ENCODE measurements at regions of chr19 and their contacts with region 1.

Region 1: DNA sequence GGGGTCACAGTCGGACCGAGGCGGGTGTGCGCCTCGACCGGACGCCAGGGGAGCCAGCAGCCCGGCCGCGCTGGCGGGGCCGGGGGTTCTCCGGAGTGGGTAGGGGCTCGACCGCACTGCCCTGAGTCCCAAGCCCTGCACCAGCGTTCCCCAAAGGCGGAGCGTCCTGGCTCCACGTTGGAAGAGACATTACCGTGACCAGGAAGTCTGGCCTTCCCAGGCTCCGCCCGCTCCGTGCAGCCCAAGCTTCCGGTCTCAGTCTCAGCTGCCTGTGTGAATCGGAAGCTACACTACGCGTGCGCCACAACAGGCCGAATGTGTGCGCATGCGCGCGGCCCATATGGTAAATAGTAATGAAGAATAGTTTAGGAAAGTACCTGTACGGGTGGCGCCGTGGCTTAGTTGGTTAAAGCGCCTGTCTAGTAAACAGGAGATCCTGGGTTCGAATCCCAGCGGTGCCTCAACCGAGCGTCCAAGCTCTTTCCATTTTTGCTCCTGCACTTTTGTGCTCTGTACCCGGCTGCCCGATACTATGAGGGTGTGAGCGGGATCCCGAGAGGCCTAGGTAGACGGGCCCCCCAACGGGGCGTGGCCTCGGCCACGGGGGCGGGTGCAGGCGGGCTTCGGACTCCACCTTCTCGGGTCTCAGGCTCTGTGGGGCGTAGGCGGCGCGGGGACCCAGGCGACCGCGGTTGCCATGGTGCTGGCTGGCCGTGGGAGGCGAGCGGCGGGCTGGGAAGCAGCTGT is 17.3 kb upstream of the LRP3 start:
- DNase-seq: peak; percentile 97 to 99 (median 98)
- ATAC-seq: peak; percentile 95
- H3K4me3 ChIP-seq: peak overlapping the region; percentile 67 to 83
- H3K27ac ChIP-seq: peak overlapping the region; percentile 91 to 97
- H3K4me1 ChIP-seq: peaks cover 6 to 43% of the 10 kb centered on the region in 2 donors
- H3K27me3 ChIP-seq: no peaks in the 10 kb centered on the region
- CTCF ChIP-seq: no peak

Region 2: GRCh38 chr19:32895384-32895783 is 281.5 kb before region 1 on chr19:
- intact Hi-C with region 1: no loop called
- DNase-seq: no peak
- ATAC-seq: no peak
- H3K4me3 ChIP-seq: no peak overlapping the region
- H3K27ac ChIP-seq: no peak overlapping the region
- H3K4me1 ChIP-seq: no peaks in the 10 kb centered on the region
- H3K27me3 ChIP-seq: no peaks in the 10 kb centered on the region
- CTCF ChIP-seq: no peak

Region 3: DNA sequence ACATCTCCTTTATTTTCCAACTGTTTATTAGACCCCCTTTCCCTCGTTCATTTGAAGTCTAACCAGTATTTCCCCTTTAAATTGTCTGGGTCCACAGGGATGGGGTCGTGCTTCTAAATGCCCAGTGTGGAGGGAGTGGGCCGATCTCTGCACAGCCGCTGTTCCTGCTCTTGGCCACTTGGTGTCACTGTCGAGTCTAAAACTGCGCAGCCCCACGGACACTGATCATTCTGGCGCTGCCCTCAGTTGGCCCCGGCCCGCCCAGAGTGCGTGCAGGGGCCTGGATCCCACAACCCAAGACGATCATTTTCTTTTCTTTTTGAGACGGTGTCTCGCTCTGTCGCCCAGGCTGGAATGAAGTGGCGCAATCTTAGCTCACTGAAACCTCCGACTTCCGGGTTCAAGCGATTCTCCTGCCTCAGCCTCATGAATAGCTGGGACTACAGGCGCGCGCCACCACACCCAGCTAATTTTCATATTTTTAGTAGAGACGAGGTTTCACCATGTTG is 32.9 kb before region 1 on chr19:
- intact Hi-C with region 1: loop called in 1 of 2 experiments (anchors 5 kb)
- DNase-seq: peak; percentile 48 to 86 (median 68)
- ATAC-seq: peak; percentile 100
- H3K4me3 ChIP-seq: no peak overlapping the region
- H3K27ac ChIP-seq: no peak overlapping the region
- H3K4me1 ChIP-seq: no peaks in the 10 kb centered on the region
- H3K27me3 ChIP-seq: peaks cover 0 to 6% of the 10 kb centered on the region in 2 donors
- CTCF ChIP-seq: peak; percentile 90 to 93

Measured in left lung (tissue), 14 donors.